Endothelial cell of umbilical vein (primary cell): ENCODE measurements at regions of chr12 and their contacts with region 1.

Region 1: DNA sequence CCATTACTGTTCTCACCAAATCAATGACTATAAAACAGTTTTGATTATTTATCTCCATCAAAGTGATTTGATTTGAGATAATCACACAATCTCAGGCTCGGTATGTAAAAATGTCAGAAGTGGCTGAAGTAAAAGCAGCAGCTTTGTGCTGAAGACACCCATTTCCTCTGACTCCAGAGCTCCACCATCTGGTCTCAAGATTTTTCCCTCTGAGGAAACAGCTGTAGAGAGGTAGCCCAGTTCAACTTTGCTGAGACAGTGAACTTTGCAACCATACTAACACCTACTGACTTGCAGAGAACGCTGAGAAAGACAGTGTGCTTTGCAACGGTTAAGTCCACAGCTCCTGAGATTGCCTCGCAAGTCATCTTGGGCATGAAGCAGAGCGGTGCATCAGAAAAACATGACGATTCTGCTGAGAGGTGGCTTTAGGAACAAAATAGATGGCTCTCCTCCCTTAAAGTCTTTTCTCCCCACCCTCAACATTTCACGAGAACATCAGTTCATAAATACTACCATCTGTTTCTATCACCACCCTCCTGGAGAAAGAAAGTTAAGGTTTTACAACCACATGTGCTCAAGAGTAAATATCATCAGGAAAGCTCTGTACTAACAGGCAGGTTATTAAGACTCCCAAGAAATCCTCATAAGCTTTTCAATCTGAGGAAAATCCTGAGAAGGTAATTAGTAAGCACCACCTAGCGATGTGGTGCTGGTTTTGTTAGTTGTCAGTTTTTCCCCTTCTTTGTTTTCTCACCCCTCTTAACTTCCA is 34.8 kb downstream of the HIGD1C start:
- DNase-seq: peak; percentile 81
- H3K4me3 ChIP-seq: no peak overlapping the region
- H3K27ac ChIP-seq: peak overlapping the region; percentile 15
- H3K4me1 ChIP-seq: peaks cover 41% of the 10 kb centered on the region
- H3K27me3 ChIP-seq: no peaks in the 10 kb centered on the region
- CTCF ChIP-seq: peak; percentile 28 to 53
- POLR2A ChIP-seq: no peak

Region 2: GRCh38 chr12:50677858-50678257 is 309.3 kb before region 1 on chr12:
- CTCF ChIA-PET with region 1: no interaction called
- POLR2A ChIA-PET with region 1: no interaction called
- dilution Hi-C with region 1: no loop called
- intact Hi-C with region 1: no loop called
- DNase-seq: no peak
- H3K4me3 ChIP-seq: no peak overlapping the region
- H3K27ac ChIP-seq: no peak overlapping the region
- H3K4me1 ChIP-seq: no peaks in the 10 kb centered on the region
- H3K27me3 ChIP-seq: no peaks in the 10 kb centered on the region
- CTCF ChIP-seq: no peak
- POLR2A ChIP-seq: no peak

Region 3: GRCh38 chr12:51025836-51026638 is 38.9 kb after region 1 on chr12 and contains the start of gene SLC11A2:
- CTCF ChIA-PET with region 1: interaction called, 20 read pairs
- POLR2A ChIA-PET with region 1: no interaction called
- dilution Hi-C with region 1: no loop called
- intact Hi-C with region 1: loop called (anchors 5 kb)
- DNase-seq: peak; percentile 95
- H3K4me3 ChIP-seq: peak within 1 kb of the TSS; percentile 64 to 79 (median 78)
- H3K27ac ChIP-seq: peak within 1 kb of the TSS; percentile 90
- H3K4me1 ChIP-seq: peaks cover 17% of the 10 kb centered on the region
- H3K27me3 ChIP-seq: peaks cover 5 to 7% of the 10 kb centered on the region in 2 experiments
- CTCF ChIP-seq: peak in 1 of 2 donors; percentile 31
- POLR2A ChIP-seq: peak; percentile 73
- total RNA-seq, gene SLC11A2: 41.1 and 56.4 TPM in 2 replicates

Region 4: DNA sequence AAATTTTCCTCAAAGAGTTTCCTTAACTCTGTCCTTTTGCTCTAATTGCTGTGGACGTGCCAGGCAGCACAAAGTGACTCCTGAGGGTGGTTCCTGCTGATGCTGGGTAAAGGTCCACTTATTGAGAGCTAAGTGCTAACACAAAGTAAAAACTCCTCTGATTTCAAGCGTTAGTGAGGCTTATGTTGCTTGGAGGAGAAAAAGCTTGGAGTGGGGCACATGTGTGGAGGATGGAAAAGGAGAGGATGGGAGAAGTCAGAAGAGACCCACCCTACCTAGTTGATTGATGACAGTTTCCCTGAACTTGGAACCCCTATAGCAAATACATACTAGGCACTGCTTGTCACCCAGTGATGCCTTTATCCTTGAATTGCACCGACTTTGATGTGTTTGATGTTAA is 49.1 kb after region 1 on chr12:
- CTCF ChIA-PET with region 1: no interaction called
- POLR2A ChIA-PET with region 1: no interaction called
- dilution Hi-C with region 1: no loop called
- intact Hi-C with region 1: no loop called
- DNase-seq: no peak
- H3K4me3 ChIP-seq: no peak overlapping the region
- H3K27ac ChIP-seq: no peak overlapping the region
- H3K4me1 ChIP-seq: peaks cover 8% of the 10 kb centered on the region
- H3K27me3 ChIP-seq: no peaks in the 10 kb centered on the region
- CTCF ChIP-seq: no peak
- POLR2A ChIP-seq: no peak